ENCODE measurements at regions of chr14 and their contacts with region 1.

Region 1: DNA sequence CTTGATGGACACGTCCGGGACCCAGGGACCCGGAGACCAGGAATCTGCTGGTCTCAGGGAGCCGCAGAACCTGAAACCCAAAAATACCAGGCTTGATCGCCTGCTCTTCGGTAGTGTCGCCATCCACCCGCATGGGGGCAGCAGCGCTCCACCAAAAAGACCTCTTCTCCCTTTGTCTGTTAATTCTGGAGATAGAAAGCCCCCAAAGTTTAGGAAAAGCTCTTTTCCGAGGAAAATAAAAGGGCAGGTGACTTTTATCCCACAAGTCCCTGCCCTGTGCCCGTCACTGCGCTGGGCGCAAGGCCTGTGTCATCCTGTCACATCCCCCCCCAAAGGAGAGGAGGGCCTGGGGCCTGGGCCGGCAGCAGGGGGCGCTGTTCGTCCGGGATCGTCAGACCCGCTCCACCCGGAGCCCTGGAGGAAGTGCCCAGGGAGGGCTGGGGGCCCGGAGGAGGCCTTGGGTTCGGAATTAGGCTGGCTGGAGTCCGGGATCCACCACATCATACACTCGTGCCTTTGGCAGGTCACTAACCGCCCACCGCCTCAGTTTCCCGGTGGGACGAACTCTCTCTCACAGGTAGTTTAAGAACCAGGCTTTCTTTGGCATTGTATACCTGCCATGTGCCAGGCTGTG is 31.9 kb downstream of the DAD1 start:
- DNase-seq: peak; percentile 33
- H3K4me3 ChIP-seq: peak overlapping the region; percentile 43
- H3K27ac ChIP-seq: peak overlapping the region; percentile 57
- H3K27me3 ChIP-seq: no peaks in the 10 kb centered on the region
- CTCF ChIP-seq: peak; percentile 92

Region 2: DNA sequence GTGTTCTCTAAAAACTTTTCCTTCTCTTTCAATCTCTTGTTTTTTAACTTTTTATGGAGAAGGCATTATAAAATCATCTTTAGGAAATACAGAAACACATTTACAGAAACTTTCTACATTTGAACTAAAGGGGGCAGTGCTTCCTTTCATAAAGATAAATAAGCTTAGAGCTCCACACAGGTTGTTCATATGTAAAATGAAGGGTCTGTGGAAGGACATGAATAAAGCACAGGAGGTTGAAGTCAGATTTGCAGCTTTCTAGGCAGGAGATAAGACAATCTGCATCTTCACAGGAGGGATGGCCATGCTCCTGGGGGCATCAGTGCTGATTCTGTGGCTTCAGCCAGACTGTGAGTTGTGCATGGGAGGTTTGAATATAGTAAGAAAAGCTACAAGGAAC is 394.1 kb before region 1 on chr14:
- CTCF ChIA-PET with region 1: no interaction called
- POLR2A ChIA-PET with region 1: no interaction called
- DNase-seq: no peak
- H3K4me3 ChIP-seq: no peak overlapping the region
- H3K27ac ChIP-seq: no peak overlapping the region
- H3K27me3 ChIP-seq: peaks cover 2% of the 10 kb centered on the region
- CTCF ChIP-seq: peak; percentile 60

Region 3: GRCh38 chr14:22370084-22370847 is 186.8 kb before region 1 on chr14:
- CTCF ChIA-PET with region 1: no interaction called
- POLR2A ChIA-PET with region 1: no interaction called
- DNase-seq: no peak
- H3K4me3 ChIP-seq: no peak overlapping the region
- H3K27ac ChIP-seq: no peak overlapping the region
- H3K27me3 ChIP-seq: peaks cover 12% of the 10 kb centered on the region
- CTCF ChIP-seq: no peak

Region 4: DNA sequence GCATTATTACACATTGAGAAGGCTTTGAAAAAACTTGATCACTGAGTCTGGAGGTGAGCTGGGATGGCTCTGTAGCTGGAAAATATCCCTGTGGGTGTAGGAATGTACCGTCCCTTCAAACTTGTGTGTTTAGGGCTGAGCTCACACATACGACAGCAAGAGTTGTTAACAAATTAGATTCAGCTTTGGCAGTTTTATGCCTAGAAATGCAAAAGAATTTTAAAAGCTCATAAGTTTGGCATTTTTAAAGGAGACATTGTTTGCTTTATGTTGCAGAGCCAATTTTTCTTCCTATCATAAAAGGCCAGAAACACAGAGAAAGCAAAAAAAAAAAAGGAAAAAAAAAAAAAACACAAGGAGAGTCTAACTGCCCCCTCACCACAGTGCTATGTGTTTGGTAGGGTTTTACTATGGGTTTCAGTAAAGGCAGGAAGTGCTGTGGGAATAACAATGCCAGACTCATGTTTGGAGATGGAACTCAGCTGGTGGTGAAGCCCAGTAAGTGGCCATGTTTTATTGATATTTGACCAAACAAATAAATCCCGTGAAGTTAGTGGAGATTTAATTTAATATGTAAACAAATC is 46.5 kb before region 1 on chr14:
- CTCF ChIA-PET with region 1: interaction called, 37 read pairs
- POLR2A ChIA-PET with region 1: no interaction called
- DNase-seq: peak; percentile 59
- H3K4me3 ChIP-seq: no peak overlapping the region
- H3K27ac ChIP-seq: no peak overlapping the region
- H3K27me3 ChIP-seq: no peaks in the 10 kb centered on the region
- CTCF ChIP-seq: no peak

Region 5: DNA sequence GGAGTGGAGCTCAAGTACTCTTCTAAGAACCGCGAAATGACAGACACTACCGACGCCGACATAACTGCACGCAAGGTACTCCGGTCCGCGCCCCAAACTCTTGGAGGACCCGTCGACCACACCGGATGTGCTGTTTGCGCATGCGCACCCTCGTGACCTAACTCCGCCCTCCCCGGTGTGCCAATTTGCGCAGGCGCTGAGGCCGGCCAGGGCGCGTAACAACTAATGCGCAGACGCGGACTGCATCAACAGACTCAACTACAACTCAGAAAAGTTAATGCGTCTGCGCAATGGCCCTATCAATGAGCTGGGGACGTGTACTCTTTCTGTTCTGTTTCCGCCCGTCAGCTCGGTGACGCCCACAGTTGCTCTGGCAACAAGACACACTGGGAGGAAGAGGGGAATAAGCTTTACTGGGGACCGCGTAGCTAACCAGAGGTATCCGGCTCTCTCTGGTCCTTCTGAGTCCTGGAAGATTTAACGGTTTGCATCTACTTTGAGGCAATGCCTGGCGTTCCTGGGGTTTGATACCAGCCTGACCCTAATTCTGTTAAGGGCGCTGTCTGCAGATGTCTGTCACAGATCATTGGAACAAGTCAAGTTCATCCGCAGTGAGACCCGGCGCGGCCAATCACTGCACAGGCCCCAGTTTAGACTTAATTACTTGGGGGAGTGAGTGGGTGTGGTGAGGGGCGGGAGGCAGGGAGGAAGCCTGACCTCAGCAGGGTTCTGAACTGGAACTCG is 32.2 kb after region 1 on chr14 and contains the start of gene DAD1:
- CTCF ChIA-PET with region 1: interaction called, 24 read pairs
- POLR2A ChIA-PET with region 1: no interaction called
- DNase-seq: peak; percentile 99
- H3K4me3 ChIP-seq: peak within 1 kb of the TSS; percentile 98
- H3K27ac ChIP-seq: peak within 1 kb of the TSS; percentile 97
- H3K27me3 ChIP-seq: no peaks in the 10 kb centered on the region
- CTCF ChIP-seq: no peak
- polyA plus RNA-seq, gene DAD1: 420 and 467 TPM in 2 replicates

Region 6: GRCh38 chr14:22630486-22630885 is 73.4 kb after region 1 on chr14:
- CTCF ChIA-PET with region 1: no interaction called
- POLR2A ChIA-PET with region 1: no interaction called
- DNase-seq: peak; percentile 59
- H3K4me3 ChIP-seq: no peak overlapping the region
- H3K27ac ChIP-seq: no peak overlapping the region
- H3K27me3 ChIP-seq: peaks cover 4% of the 10 kb centered on the region
- CTCF ChIP-seq: no peak

Region 7: GRCh38 chr14:22822571-22823098 is 265.5 kb after region 1 on chr14:
- CTCF ChIA-PET with region 1: interaction called, 28 read pairs
- POLR2A ChIA-PET with region 1: no interaction called
- DNase-seq: peak; percentile 62
- H3K4me3 ChIP-seq: peak overlapping the region; percentile 34
- H3K27ac ChIP-seq: peak overlapping the region; percentile 65
- H3K27me3 ChIP-seq: no peaks in the 10 kb centered on the region
- CTCF ChIP-seq: peak; percentile 87

Region 8: GRCh38 chr14:22886500-22887259 is 329.6 kb after region 1 on chr14:
- CTCF ChIA-PET with region 1: interaction called, 11 read pairs
- POLR2A ChIA-PET with region 1: no interaction called
- DNase-seq: no peak
- H3K4me3 ChIP-seq: peak overlapping the region; percentile 63
- H3K27ac ChIP-seq: peak overlapping the region; percentile 65
- H3K27me3 ChIP-seq: no peaks in the 10 kb centered on the region
- CTCF ChIP-seq: no peak

Region 9: DNA sequence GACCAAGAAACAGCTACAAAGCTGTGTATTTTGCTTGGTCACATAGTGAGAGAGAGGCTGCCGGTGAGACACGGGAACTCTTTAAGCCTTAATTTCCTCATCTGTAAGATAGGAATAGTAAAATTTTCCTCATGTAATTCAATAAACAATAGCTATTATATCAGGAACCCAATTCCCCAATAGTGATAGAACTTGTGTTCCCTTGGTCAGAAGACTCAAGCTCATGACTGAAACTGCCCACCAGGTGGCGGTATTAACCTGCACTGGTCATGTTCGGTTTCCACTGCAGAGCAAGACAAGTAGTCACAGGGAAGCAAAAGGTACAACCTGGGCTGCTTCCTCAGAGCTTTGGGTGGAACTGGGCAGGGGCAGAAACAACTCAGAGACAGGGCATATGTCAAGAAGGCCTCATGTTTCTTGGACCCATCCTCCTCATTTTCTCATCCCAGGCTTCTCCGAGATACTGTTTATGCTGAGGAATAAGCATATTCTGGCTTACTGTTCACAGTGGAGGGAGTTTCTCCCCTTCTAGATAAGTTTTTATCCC is 429.5 kb after region 1 on chr14:
- CTCF ChIA-PET with region 1: interaction called, 73 read pairs
- POLR2A ChIA-PET with region 1: interaction called, 3 read pairs
- DNase-seq: peak; percentile 75
- H3K4me3 ChIP-seq: no peak overlapping the region
- H3K27ac ChIP-seq: no peak overlapping the region
- H3K27me3 ChIP-seq: no peaks in the 10 kb centered on the region
- CTCF ChIP-seq: peak; percentile 90

Measured in AG04450 (cell line).